Dorsolateral prefrontal cortex (tissue), 120 donors: ENCODE measurements at regions of chr4 and their contacts with region 1.

Region 1: DNA sequence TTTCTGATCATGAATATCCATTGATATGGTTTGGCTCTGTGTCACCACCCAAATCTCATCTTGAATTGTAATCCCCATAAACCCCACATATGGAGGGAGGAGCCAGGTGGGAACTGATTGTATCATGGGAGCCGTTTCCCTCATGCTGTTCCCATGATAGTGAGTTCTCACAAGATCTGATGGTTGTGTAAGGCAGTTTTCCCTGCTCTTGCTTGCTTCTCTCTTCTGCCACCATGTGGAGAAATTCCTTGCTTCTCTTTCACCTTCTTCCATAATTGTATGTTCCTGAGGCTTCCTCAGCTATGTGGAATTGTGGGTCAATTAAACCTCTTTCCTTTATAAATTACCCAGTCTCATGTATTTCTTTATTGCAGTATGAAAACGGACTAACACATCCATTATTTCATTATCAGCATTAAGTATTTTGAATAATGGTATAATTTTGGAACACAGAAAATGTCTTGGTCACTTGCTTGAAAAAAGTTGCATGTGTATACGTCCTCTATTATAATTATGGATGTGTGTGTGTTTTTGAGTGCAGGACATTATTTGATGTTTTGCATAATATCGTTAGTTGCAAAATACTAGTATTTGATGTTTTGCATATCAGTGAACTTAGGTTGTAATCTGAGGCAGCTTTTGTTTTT is 334.6 kb downstream of the PCDH10 start:
- DNase-seq: no peak
- H3K4me3 ChIP-seq: no peak overlapping the region
- H3K27ac ChIP-seq: no peak overlapping the region
- H3K27me3 ChIP-seq: no peaks in the 10 kb centered on the region
- CTCF ChIP-seq: peak in 51 of 56 donors; percentile 23 to 69 (median 46)

Region 2: DNA sequence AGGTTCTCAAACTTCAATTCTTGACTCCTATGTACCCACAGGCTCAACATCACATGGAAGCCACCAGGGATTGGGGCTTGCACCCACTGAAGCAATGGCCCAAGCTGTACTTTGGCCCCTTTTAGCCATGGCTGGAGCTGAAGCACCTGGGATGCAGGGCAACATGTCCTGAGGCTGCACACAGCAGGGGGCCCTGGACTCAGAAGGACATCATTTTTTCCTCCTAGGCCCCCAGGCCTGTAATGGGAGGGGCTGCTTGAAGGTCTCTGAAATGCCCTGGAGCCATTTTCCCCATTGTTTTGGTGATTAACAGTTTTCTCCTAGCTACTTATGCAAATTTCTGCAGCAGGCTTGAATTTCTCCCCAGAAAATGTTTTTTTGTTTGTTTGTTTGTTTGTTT is 799.8 kb before region 1 on chr4:
- intact Hi-C with region 1: no loop called
- DNase-seq: no peak
- H3K4me3 ChIP-seq: no peak overlapping the region
- H3K27ac ChIP-seq: no peak overlapping the region
- H3K27me3 ChIP-seq: no peaks in the 10 kb centered on the region
- CTCF ChIP-seq: no peak

Region 3: DNA sequence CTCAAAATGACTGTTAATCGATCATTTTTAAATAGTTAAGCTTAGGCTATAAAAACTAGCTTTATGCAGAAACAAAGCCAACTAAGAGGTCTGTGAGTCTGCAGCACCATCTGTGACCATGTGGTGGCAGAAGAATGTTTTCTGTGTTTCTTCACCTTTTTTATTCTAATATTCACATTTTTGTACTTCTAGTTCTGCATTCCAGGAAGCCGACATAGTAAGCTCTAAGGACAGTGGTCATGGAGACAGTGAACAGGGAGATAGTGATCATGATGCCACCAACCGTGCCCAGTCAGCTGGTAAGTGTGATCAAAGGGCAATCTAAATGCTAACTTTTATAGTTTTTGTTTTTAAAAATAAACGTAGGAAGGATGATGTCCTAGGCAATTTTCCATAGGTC is 329.0 kb before region 1 on chr4:
- intact Hi-C with region 1: loop called in 1 of 2 experiments (anchors 5 kb)
- DNase-seq: peak in 4 of 10 donors; percentile 40 to 61 (median 50)
- H3K4me3 ChIP-seq: peak overlapping the region; percentile 65 to 97 (median 80)
- H3K27ac ChIP-seq: peak overlapping the region in 58 of 59 donors; percentile 3 to 98 (median 95)
- H3K27me3 ChIP-seq: peaks cover 0 to 2% (median 0%) of the 10 kb centered on the region in 45 donors
- CTCF ChIP-seq: peak in 55 of 56 donors; percentile 52 to 84 (median 76)

Region 4: GRCh38 chr4:133452678-133453077 is 31.0 kb before region 1 on chr4:
- intact Hi-C with region 1: no loop called
- DNase-seq: no peak
- H3K4me3 ChIP-seq: no peak overlapping the region
- H3K27ac ChIP-seq: no peak overlapping the region
- H3K27me3 ChIP-seq: no peaks in the 10 kb centered on the region
- CTCF ChIP-seq: no peak

Region 5: GRCh38 chr4:133465022-133465421 is 18.7 kb before region 1 on chr4:
- intact Hi-C with region 1: no loop called
- DNase-seq: no peak
- H3K4me3 ChIP-seq: no peak overlapping the region
- H3K27ac ChIP-seq: no peak overlapping the region
- H3K27me3 ChIP-seq: no peaks in the 10 kb centered on the region
- CTCF ChIP-seq: no peak